Heart left ventricle (tissue), 16 donors: ENCODE measurements at regions of chr15 and their contacts with region 1.

Region 1: DNA sequence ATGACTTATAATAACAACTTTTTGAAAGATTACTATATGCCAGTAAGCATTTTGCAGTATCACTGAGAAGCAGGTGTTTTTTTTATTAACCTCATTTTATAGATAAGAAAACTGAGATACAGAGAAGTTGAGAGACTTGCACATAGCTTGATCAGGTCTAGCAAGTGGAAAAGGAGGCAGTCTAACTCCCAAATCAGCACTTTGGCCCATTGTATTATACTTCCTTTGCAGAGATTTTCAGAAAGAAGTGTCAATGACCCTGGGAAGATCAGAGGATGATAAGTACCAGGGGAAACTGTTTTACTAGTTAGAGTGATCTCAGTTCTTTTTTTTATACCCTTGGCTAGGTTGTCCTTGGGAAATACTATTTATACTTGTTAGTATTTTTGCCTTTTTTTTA is 358.7 kb downstream of the SQOR start:
- DNase-seq: no peak
- ATAC-seq: peak; percentile 28 to 85 (median 51)
- H3K4me3 ChIP-seq: no peak overlapping the region
- H3K27ac ChIP-seq: no peak overlapping the region
- H3K4me1 ChIP-seq: peaks cover 0 to 14% (median 0%) of the 10 kb centered on the region in 12 donors
- H3K27me3 ChIP-seq: no peaks in the 10 kb centered on the region
- CTCF ChIP-seq: no peak
- POLR2A ChIP-seq: no peak

Region 2: GRCh38 chr15:45674677-45675076 is 318.8 kb before region 1 on chr15:
- intact Hi-C with region 1: no loop called
- DNase-seq: no peak
- ATAC-seq: no peak
- H3K4me3 ChIP-seq: no peak overlapping the region
- H3K27ac ChIP-seq: no peak overlapping the region
- H3K4me1 ChIP-seq: peaks cover 0 to 4% (median 0%) of the 10 kb centered on the region in 12 donors
- H3K27me3 ChIP-seq: no peaks in the 10 kb centered on the region
- CTCF ChIP-seq: no peak
- POLR2A ChIP-seq: no peak

Region 3: DNA sequence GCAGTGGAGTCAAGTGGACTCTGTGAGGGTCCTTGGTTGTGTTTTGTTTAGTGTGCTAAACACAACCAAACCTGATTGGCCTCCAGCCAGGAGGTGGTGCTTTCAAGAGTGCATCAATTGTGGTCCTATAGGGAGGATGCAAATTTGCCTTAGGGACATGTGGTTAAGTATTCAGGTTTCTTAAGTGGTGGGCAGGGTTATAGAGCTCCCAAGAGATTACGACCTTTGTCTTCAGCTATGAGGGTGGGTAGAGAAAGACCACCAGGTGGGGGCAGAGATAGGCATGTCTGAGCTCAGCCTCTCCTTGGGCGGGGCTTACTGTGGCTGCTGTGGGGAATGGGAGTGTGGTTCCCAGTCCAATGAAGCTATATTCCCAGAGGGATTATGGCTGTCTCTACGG is 172.1 kb before region 1 on chr15:
- intact Hi-C with region 1: no loop called
- DNase-seq: no peak
- ATAC-seq: no peak
- H3K4me3 ChIP-seq: no peak overlapping the region
- H3K27ac ChIP-seq: no peak overlapping the region
- H3K4me1 ChIP-seq: no peaks in the 10 kb centered on the region
- H3K27me3 ChIP-seq: peaks cover 0 to 3% (median 0%) of the 10 kb centered on the region in 9 donors
- CTCF ChIP-seq: no peak
- POLR2A ChIP-seq: no peak

Region 4: DNA sequence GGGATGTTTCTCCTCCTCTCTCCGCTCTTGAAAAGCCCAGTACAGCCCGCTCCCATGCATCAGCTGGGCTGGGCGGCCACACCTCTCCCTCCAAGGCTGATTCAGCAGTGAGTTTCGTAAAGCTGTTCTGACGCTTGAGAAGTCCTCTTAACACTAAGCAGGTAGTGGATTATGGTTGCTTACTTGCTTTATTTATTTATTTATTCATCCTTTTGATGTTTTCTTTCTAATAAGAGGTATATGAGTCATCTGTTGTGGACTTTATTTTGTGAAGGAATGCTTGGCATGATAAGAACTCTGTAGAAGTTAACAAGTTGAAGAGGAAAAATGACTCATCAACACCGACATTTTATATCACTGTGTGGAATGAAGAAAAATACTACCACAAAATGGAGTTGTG is 73.7 kb before region 1 on chr15:
- intact Hi-C with region 1: loop called in 3 of 10 experiments (anchors 5 to 10 kb)
- DNase-seq: no peak
- ATAC-seq: peak in 2 of 4 donors; percentile 65
- H3K4me3 ChIP-seq: no peak overlapping the region
- H3K27ac ChIP-seq: peak overlapping the region in 11 of 12 donors; percentile 37 to 76 (median 59)
- H3K4me1 ChIP-seq: peaks cover 0 to 33% (median 10%) of the 10 kb centered on the region in 12 donors
- H3K27me3 ChIP-seq: no peaks in the 10 kb centered on the region
- CTCF ChIP-seq: no peak
- POLR2A ChIP-seq: no peak

Region 5: GRCh38 chr15:45980376-45980775 is 13.1 kb before region 1 on chr15:
- intact Hi-C with region 1: no loop called
- DNase-seq: no peak
- ATAC-seq: no peak
- H3K4me3 ChIP-seq: no peak overlapping the region
- H3K27ac ChIP-seq: no peak overlapping the region
- H3K4me1 ChIP-seq: no peaks in the 10 kb centered on the region
- H3K27me3 ChIP-seq: no peaks in the 10 kb centered on the region
- CTCF ChIP-seq: no peak
- POLR2A ChIP-seq: no peak

Region 6: GRCh38 chr15:46080016-46080415 is 86.5 kb after region 1 on chr15:
- intact Hi-C with region 1: loop called in 2 of 10 experiments (anchors 5 to 10 kb)
- DNase-seq: peak in 1 of 5 donors; percentile 62
- ATAC-seq: peak in 1 of 4 donors; percentile 44
- H3K4me3 ChIP-seq: no peak overlapping the region
- H3K27ac ChIP-seq: peak overlapping the region in 1 of 12 donors; percentile 16
- H3K4me1 ChIP-seq: peaks cover 0 to 13% (median 2%) of the 10 kb centered on the region in 12 donors
- H3K27me3 ChIP-seq: no peaks in the 10 kb centered on the region
- CTCF ChIP-seq: no peak
- POLR2A ChIP-seq: no peak

Region 7: GRCh38 chr15:46091860-46092450 is 98.4 kb after region 1 on chr15:
- intact Hi-C with region 1: loop called in 2 of 10 experiments (anchors 5 to 10 kb)
- DNase-seq: peak in 1 of 5 donors; percentile 10
- ATAC-seq: no peak
- H3K4me3 ChIP-seq: no peak overlapping the region
- H3K27ac ChIP-seq: no peak overlapping the region
- H3K4me1 ChIP-seq: peaks cover 0 to 24% (median 2%) of the 10 kb centered on the region in 12 donors
- H3K27me3 ChIP-seq: no peaks in the 10 kb centered on the region
- CTCF ChIP-seq: peak; percentile 26 to 57 (median 39)
- POLR2A ChIP-seq: no peak